HCT116 (cell line): ENCODE measurements at regions of chr1 and their contacts with region 1.

Region 1: GRCh38 chr1:88736639-88737248 is 52.7 kb downstream of the PKN2 start:
- DNase-seq: peak; percentile 23
- ATAC-seq: peak; percentile 93
- H3K4me3 ChIP-seq: no peak overlapping the region
- H3K27ac ChIP-seq: no peak overlapping the region
- H3K4me1 ChIP-seq: no peaks in the 10 kb centered on the region
- H3K27me3 ChIP-seq: no peaks in the 10 kb centered on the region
- CTCF ChIP-seq: peak; percentile 58 to 90 (median 80); a peak in 5 of 6 replicates
- POLR2A ChIP-seq: no peak
- RAD21 ChIP-seq: peak; percentile 89

Region 2: DNA sequence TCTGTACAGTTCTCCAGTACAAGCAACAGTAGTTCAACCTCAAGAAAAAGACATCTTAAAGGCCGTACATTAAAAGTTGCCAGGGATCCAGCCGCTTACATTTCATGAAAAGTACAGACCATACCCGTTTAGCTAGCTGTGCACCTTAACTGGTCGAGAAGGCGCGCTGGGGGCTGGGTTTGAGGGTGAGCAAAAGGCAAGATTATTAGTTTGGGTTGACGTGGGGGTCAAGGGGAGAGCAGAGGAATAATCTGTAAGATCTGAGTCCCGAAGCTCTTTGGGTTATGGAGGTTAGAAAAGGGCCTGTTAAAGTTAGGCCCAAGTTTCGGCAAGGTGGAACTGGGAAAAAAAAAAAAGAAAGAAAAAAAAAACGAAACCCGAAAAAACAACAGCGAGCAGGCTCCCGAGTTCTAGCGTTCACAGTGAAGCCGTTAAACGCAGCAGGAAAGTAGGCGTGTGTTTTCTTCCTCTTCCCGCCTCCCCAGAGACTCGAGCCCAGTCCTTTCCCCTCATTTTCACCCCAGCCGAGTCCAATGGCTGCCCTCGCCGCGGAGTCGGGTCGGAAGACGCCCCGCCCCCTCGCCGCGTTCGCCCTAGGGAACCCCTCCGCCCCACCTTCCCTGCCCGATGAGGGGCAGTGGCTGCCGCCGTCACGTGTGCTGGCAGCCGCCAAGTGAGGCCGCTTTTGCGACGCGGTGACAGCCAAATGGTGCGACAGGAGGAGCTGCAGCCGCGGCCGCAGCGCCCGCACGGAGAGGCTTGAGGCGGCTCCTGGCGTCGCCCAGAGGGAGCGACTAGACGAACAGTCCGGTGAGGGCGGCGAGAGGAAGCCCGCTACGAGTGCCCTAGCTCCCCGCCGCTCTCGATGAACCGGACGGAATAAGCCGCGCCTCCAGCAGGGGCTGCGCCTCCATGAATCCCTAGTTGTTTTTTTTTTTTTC is 52.9 kb before region 1 on chr1 and contains the start of gene PKN2:
- CTCF ChIA-PET with region 1: no interaction called
- POLR2A ChIA-PET with region 1: no interaction called
- RAD21 ChIA-PET with region 1: interaction called in 1 of 2 experiments, 3 read pairs
- intact Hi-C with region 1: loop called (anchors 1 kb)
- DNase-seq: peak; percentile 97
- ATAC-seq: peak; percentile 93
- H3K4me3 ChIP-seq: peak within 1 kb of the TSS; percentile 70 to 82
- H3K27ac ChIP-seq: peak within 1 kb of the TSS; percentile 94
- H3K4me1 ChIP-seq: peaks cover 4 to 21% of the 10 kb centered on the region in 2 experiments; a peak in 3 of 4 replicates
- H3K27me3 ChIP-seq: no peaks in the 10 kb centered on the region
- CTCF ChIP-seq: no peak
- POLR2A ChIP-seq: peak; percentile 55
- RAD21 ChIP-seq: no peak
- total RNA-seq, gene PKN2: 44.3 TPM

Region 3: GRCh38 chr1:88746916-88747315 is 10.2 kb after region 1 on chr1:
- CTCF ChIA-PET with region 1: no interaction called
- POLR2A ChIA-PET with region 1: no interaction called
- RAD21 ChIA-PET with region 1: no interaction called
- intact Hi-C with region 1: no loop called
- DNase-seq: no peak
- ATAC-seq: no peak
- H3K4me3 ChIP-seq: no peak overlapping the region
- H3K27ac ChIP-seq: no peak overlapping the region
- H3K4me1 ChIP-seq: no peaks in the 10 kb centered on the region
- H3K27me3 ChIP-seq: no peaks in the 10 kb centered on the region
- CTCF ChIP-seq: no peak
- POLR2A ChIP-seq: no peak
- RAD21 ChIP-seq: no peak

Region 4: GRCh38 chr1:88877382-88877825 is 140.7 kb after region 1 on chr1:
- CTCF ChIA-PET with region 1: interaction called, 13 read pairs
- POLR2A ChIA-PET with region 1: no interaction called
- RAD21 ChIA-PET with region 1: no interaction called
- intact Hi-C with region 1: loop called (anchors 1 kb)
- DNase-seq: peak; percentile 19
- ATAC-seq: no peak; the same call in 1 of the 2 replicates
- H3K4me3 ChIP-seq: no peak overlapping the region
- H3K27ac ChIP-seq: no peak overlapping the region
- H3K4me1 ChIP-seq: no peaks in the 10 kb centered on the region
- H3K27me3 ChIP-seq: no peaks in the 10 kb centered on the region
- CTCF ChIP-seq: peak in 2 of 3 experiments; percentile 61 to 69; a peak in 3 of 6 replicates
- POLR2A ChIP-seq: no peak
- RAD21 ChIP-seq: peak; percentile 69

Region 5: DNA sequence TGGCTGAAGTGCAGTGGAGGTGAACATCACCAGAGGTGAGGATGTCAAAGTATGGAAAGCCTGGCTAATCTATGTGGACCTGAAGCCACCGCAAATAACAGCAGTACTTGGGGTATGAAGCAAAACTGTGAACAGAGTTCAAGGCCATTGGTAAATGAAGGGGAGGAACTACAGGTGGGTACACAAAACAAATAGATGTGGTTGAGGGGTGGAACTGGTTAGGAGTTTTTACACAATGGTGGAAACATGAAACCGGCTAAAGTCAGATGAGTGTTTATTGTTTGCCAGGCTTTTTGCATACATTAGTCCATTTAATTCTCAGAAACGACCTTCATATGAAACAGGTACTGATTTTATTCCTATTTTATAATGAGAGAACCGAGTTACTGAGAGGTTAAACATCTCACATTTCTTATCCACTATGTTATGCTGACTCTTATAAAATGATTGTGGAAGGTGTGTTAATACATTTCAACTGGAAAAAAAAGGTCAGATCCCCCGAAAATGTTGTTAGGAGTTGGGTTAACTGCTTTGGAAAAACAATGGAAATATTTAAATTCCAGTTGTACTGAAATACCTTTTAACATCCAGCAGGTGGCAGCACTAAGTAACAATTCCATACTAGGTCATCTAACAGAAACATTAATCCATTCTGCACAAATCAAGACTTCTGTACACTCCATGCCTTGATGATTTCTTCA is 198.9 kb after region 1 on chr1:
- CTCF ChIA-PET with region 1: no interaction called
- POLR2A ChIA-PET with region 1: no interaction called
- RAD21 ChIA-PET with region 1: no interaction called
- intact Hi-C with region 1: loop called (anchors 1 kb)
- DNase-seq: peak; percentile 16
- ATAC-seq: peak; percentile 59
- H3K4me3 ChIP-seq: no peak overlapping the region
- H3K27ac ChIP-seq: no peak overlapping the region
- H3K4me1 ChIP-seq: no peaks in the 10 kb centered on the region
- H3K27me3 ChIP-seq: no peaks in the 10 kb centered on the region
- CTCF ChIP-seq: peak in 2 of 3 experiments; percentile 41 to 74; a peak in 3 of 6 replicates
- POLR2A ChIP-seq: no peak
- RAD21 ChIP-seq: peak; percentile 53

Region 6: DNA sequence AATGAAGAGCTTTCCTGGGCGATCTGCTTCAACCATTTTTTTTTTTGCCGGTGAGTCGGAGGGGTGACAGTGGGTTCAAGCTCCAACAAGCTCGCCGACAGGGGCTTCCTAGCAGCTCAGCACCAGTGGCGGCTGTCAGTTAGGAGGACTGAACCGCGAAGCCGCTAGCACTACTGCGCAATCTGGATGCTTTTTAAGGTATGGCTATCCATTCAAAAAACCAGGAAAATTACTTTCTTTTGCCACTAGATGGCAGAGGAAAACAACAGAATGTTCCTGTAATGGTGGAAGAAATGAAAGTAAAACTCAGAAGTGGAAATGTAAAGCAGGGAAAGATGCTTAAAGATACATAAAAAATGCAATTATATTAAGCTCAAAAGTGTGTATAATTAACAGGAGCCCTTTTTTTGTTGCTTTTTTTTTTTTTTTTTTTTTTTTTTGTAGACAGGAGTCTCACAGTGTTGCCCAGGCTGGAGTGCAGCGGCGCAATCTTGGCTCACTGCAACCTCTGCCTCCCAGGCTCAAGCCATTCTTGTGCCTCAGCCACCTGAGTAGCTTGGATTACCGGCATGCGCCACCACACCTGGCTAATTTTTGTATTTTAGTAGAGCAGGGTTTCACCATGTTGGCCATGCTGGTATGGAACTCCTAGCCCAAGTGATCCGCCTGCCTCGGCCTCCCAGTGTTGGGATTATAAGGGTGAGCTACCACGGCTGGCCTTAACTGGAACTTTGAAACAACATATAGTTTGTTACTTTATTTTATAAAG is 247.2 kb after region 1 on chr1:
- CTCF ChIA-PET with region 1: interaction called, 4 read pairs
- POLR2A ChIA-PET with region 1: no interaction called
- RAD21 ChIA-PET with region 1: no interaction called
- intact Hi-C with region 1: loop called (anchors 5 kb)
- DNase-seq: peak; percentile 23
- ATAC-seq: no peak
- H3K4me3 ChIP-seq: no peak overlapping the region
- H3K27ac ChIP-seq: peak overlapping the region; percentile 45; the same call in 1 of the 2 replicates
- H3K4me1 ChIP-seq: peaks cover 25 to 35% of the 10 kb centered on the region in 2 experiments
- H3K27me3 ChIP-seq: no peaks in the 10 kb centered on the region
- CTCF ChIP-seq: peak; percentile 31 to 71 (median 54); a peak in 5 of 6 replicates
- POLR2A ChIP-seq: no peak
- RAD21 ChIP-seq: peak; percentile 65

Region 7: GRCh38 chr1:89358287-89358893 is 621.6 kb after region 1 on chr1:
- CTCF ChIA-PET with region 1: no interaction called
- POLR2A ChIA-PET with region 1: no interaction called
- RAD21 ChIA-PET with region 1: no interaction called
- intact Hi-C with region 1: loop called (anchors 2 kb)
- DNase-seq: peak; percentile 63
- ATAC-seq: peak; percentile 96
- H3K4me3 ChIP-seq: no peak overlapping the region
- H3K27ac ChIP-seq: no peak overlapping the region
- H3K4me1 ChIP-seq: no peaks in the 10 kb centered on the region
- H3K27me3 ChIP-seq: no peaks in the 10 kb centered on the region
- CTCF ChIP-seq: peak; percentile 65 to 90 (median 81)
- POLR2A ChIP-seq: no peak
- RAD21 ChIP-seq: peak; percentile 88